K562 (cell line): ENCODE measurements at regions of chr17 and their contacts with region 1.

Region 1: GRCh38 chr17:77088455-77089123 is 52.2 kb upstream of the SEC14L1 start:
- DNase-seq: peak; percentile 91 to 98 (median 92)
- ATAC-seq: peak; percentile 96
- H3K4me3 ChIP-seq: peak overlapping the region; percentile 83
- H3K27ac ChIP-seq: peak overlapping the region; percentile 99
- H3K4me1 ChIP-seq: peaks cover 16 to 18% of the 10 kb centered on the region in 2 experiments; a peak in 4 of 5 replicates
- H3K27me3 ChIP-seq: no peaks in the 10 kb centered on the region; a peak in 1 of 5 replicates
- CTCF ChIP-seq: peak; percentile 85 to 90 (median 86)
- EP300 ChIP-seq: peak; percentile 33; the same call in 1 of the 2 replicates
- POLR2A ChIP-seq: peak; percentile 87
- RAD21 ChIP-seq: peak; percentile 54 to 55

Region 2: DNA sequence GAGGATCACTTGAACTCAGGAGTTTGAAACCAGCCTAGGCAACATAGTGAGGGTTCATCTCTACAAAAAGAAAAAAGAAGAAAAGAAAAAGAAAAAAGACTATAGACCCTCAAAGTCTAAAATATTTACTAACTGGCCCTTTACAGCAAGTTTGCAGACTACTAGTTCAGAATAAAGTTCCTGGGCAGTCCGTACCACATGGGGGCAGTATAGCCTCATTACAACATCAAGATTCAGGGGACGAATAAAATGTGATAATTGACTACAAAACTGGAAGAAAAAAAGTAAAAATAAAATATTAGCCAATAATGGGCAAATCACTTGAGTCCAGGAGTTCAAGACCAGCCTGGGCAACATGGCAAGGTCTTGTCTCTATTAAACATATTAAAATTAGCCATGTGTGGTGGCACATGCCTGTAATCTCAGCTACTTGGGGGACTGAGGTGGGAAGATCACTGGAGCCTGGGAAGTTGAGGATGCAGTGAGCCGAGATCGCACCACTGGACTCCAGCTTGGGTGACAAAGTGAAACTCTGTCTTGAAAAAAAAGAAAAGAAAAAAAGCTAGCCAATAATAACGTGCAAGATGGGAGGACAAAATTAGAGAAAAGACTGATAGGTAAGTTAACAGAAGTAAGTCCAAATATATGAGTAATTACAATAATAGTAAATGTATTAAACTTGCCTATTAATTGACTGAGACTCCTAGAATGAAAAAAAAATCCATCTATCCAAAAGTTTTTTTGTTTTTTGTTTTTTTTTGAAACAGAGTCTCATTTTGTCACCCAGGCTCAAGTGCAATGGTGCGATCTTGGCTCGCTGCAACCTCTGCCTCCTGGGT is 77.2 kb before region 1 on chr17:
- CTCF ChIA-PET with region 1: no interaction called
- POLR2A ChIA-PET with region 1: no interaction called
- in situ Hi-C with region 1: no loop called
- intact Hi-C with region 1: loop called (anchors 5 kb)
- DNase-seq: peak in 2 of 4 experiments; percentile 36 to 69
- ATAC-seq: peak; percentile 49; the same call in 1 of the 3 replicates
- H3K4me3 ChIP-seq: no peak overlapping the region
- H3K27ac ChIP-seq: no peak overlapping the region
- H3K4me1 ChIP-seq: no peaks in the 10 kb centered on the region
- H3K27me3 ChIP-seq: peaks cover 3 to 10% of the 10 kb centered on the region in 2 experiments; a peak in 3 of 5 replicates
- CTCF ChIP-seq: peak; percentile 65 to 81 (median 73)
- EP300 ChIP-seq: no peak
- POLR2A ChIP-seq: no peak
- RAD21 ChIP-seq: peak; percentile 32 to 77

Region 3: GRCh38 chr17:77068915-77069314 is 19.7 kb before region 1 on chr17:
- CTCF ChIA-PET with region 1: interaction called, 3 read pairs
- POLR2A ChIA-PET with region 1: interaction called, 7 read pairs
- in situ Hi-C with region 1: no loop called
- intact Hi-C with region 1: loop called (anchors 2 kb)
- DNase-seq: no peak
- ATAC-seq: no peak
- H3K4me3 ChIP-seq: no peak overlapping the region
- H3K27ac ChIP-seq: no peak overlapping the region; the same call in 2 of the 3 replicates
- H3K4me1 ChIP-seq: peaks cover 23 to 24% of the 10 kb centered on the region in 2 experiments; a peak in 4 of 5 replicates
- H3K27me3 ChIP-seq: no peaks in the 10 kb centered on the region
- CTCF ChIP-seq: no peak
- EP300 ChIP-seq: no peak
- POLR2A ChIP-seq: no peak
- RAD21 ChIP-seq: no peak

Region 4: GRCh38 chr17:77076124-77076872 is 12.3 kb before region 1 on chr17:
- CTCF ChIA-PET with region 1: no interaction called
- POLR2A ChIA-PET with region 1: interaction called, 10 read pairs
- in situ Hi-C with region 1: no loop called
- intact Hi-C with region 1: loop called (anchors 2 kb)
- DNase-seq: no peak
- ATAC-seq: peak; percentile 47
- H3K4me3 ChIP-seq: no peak overlapping the region
- H3K27ac ChIP-seq: no peak overlapping the region
- H3K4me1 ChIP-seq: peaks cover 10 to 14% of the 10 kb centered on the region in 2 experiments; a peak in 4 of 5 replicates
- H3K27me3 ChIP-seq: no peaks in the 10 kb centered on the region
- CTCF ChIP-seq: no peak
- EP300 ChIP-seq: no peak
- POLR2A ChIP-seq: no peak
- RAD21 ChIP-seq: no peak

Region 5: GRCh38 chr17:77127735-77128361 is 39.3 kb after region 1 on chr17:
- CTCF ChIA-PET with region 1: no interaction called
- POLR2A ChIA-PET with region 1: interaction called, 3 read pairs
- in situ Hi-C with region 1: no loop called
- intact Hi-C with region 1: loop called (anchors 5 kb)
- DNase-seq: peak in 2 of 4 experiments; percentile 31 to 51
- ATAC-seq: peak; percentile 69
- H3K4me3 ChIP-seq: no peak overlapping the region
- H3K27ac ChIP-seq: peak overlapping the region; percentile 63
- H3K4me1 ChIP-seq: peaks cover 24 to 26% of the 10 kb centered on the region in 2 experiments
- H3K27me3 ChIP-seq: no peaks in the 10 kb centered on the region
- CTCF ChIP-seq: no peak
- EP300 ChIP-seq: no peak
- POLR2A ChIP-seq: 0 out of 2 replicates have a peak, but pooled peaks have one; percentile 22
- RAD21 ChIP-seq: no peak

Region 6: GRCh38 chr17:77140166-77140878 is 51.7 kb after region 1 on chr17:
- CTCF ChIA-PET with region 1: no interaction called
- POLR2A ChIA-PET with region 1: interaction called, 3 read pairs
- in situ Hi-C with region 1: no loop called
- intact Hi-C with region 1: loop called (anchors 5 kb)
- DNase-seq: peak; percentile 98 to 99 (median 99)
- ATAC-seq: peak; percentile 96
- H3K4me3 ChIP-seq: peak overlapping the region; percentile 75
- H3K27ac ChIP-seq: peak overlapping the region; percentile 86
- H3K4me1 ChIP-seq: peaks cover 11 to 16% of the 10 kb centered on the region in 2 experiments
- H3K27me3 ChIP-seq: no peaks in the 10 kb centered on the region
- CTCF ChIP-seq: no peak; a peak in 2 of 6 replicates
- EP300 ChIP-seq: no peak
- POLR2A ChIP-seq: peak; percentile 92
- RAD21 ChIP-seq: peak; percentile 18 to 30; a peak in 3 of 4 replicates

Region 7: DNA sequence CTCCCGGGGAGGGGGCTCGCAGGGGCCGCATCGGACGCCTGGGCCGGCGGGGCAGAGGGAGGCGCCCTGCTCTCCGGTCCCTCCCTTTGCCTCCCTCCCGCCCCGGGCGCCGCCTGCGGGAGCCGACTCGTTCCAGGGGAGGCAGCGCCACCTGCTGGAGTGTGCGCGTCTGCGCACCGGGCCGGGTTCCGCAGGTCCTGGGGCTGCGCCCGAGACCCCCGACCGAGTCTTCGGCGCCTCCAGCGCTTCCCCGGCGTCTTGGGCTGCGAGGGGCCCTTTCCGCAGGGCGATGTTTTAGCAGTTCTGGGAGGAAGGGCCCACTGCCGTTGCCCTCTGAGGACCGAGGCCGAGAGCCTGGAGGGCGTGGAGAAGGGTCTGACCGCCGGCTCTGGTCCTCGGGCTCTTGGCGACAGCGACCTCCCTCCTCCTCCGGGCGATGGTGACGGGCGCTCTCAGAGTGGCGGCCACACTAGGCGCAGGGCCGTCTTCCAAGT is 158.5 kb after region 1 on chr17:
- CTCF ChIA-PET with region 1: interaction called, 43 read pairs
- POLR2A ChIA-PET with region 1: interaction called, 3 read pairs
- in situ Hi-C with region 1: loop called (anchors 5 kb)
- intact Hi-C with region 1: loop called (anchors 2 kb)
- DNase-seq: peak; percentile 88 to 93 (median 91)
- ATAC-seq: peak; percentile 98
- H3K4me3 ChIP-seq: peak overlapping the region; percentile 41
- H3K27ac ChIP-seq: no peak overlapping the region
- H3K4me1 ChIP-seq: peaks cover 0 to 19% of the 10 kb centered on the region in 2 experiments; a peak in 2 of 5 replicates
- H3K27me3 ChIP-seq: peaks cover 12 to 25% of the 10 kb centered on the region in 2 experiments; a peak in 4 of 5 replicates
- CTCF ChIP-seq: peak; percentile 79 to 92 (median 86)
- EP300 ChIP-seq: no peak
- POLR2A ChIP-seq: no peak
- RAD21 ChIP-seq: peak; percentile 95 to 97